GM18951 (cell line): ENCODE measurements at regions of chr1 and their contacts with region 1.

Region 1: DNA sequence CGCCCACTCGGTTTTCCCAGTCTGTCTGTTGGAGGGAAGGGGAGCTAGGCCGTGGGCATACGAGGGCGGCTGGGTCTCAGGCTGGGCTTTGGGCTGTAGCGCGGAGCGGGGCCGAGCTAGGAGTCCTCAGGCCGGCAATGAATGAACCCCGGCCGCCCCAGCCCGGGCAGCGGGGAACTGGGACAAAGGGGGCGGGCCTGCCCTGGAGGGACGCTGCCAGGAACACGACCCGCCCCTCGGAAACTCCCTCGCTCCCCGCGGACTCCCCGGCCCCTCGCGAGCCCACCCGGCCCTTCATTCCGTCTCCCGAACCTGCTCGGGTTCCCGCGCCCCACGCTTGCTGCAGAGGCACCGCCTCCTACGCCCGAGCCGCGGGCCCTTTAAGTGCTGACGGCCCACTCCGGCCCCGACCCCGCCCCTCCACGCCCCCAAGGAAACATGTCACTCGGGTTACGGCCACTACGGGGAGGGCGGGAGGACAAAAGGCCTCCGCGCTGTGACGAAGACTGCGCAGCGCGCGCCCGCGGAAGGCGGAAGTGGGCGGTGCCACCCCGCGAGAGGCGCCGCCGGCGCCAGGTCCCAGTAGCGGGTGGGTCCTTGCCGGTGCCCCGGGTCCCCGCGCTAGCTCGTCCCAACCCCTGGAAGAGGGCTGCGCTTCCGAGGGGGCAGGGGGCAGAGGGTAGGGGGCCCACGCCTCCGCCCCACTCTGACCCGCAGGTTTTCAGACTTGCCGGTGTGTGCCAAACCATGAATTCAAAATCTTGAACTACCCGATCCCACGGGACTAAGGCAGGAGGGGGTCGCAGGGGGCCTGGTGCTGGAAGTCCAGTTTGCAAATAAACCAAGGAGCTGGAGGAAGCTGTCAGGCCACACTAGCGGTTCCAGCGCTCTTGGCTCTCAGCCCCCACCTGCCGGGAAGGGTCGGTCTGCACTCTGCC is at the start of gene GALE:
- POLR2A ChIP-seq: peak; percentile 95

Region 2: DNA sequence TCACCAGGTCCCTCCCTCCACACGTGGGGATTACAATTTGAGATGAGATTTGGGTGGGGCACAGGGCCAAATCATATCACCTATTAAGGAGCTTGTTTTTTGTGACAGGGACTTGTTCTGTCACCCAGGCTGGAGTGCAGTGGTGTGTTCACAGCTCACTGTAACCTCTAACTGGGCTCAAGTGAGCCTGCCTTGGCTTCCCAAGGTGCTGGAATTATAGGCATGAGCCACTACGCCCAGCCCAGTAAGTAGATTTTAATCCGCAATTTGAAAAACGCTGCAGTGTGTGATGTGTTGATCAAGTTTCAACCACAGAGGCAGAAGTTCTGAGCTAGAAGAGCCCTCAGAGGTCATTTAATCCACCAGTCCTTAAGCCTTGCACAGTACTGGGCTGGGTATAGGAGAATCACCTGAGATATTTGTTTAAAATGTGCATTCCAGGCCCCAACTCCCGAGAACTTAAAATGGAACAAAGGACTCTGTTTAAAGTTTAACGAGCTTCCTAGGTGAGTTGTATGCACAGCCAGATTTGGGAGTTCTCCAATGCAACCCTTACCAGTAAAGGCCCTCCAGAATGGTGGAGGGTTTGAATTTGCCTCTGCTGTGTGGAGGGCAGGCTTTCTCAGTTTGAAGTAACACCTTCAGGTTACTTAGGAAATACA is 95.7 kb before region 1 on chr1:
- in situ Hi-C with region 1: no loop called
- POLR2A ChIP-seq: no peak

Region 3: GRCh38 chr1:23916209-23917131 is 115.8 kb after region 1 on chr1:
- in situ Hi-C with region 1: loop called (anchors 10 kb)
- POLR2A ChIP-seq: peak; percentile 31